GM12878 (cell line): ENCODE measurements at regions of chr9 and their contacts with region 1.

Region 1: GRCh38 chr9:371349-371748 is 156.7 kb downstream of the DOCK8 start:
- DNase-seq: no peak
- ATAC-seq: no peak
- H3K4me3 ChIP-seq: no peak overlapping the region
- H3K27ac ChIP-seq: no peak overlapping the region
- H3K4me1 ChIP-seq: no peaks in the 10 kb centered on the region
- H3K27me3 ChIP-seq: no peaks in the 10 kb centered on the region
- CTCF ChIP-seq: no peak
- EP300 ChIP-seq: no peak
- POLR2A ChIP-seq: no peak
- RAD21 ChIP-seq: no peak

Region 2: GRCh38 chr9:257957-258356 is 113.4 kb before region 1 on chr9:
- CTCF ChIA-PET with region 1: no interaction called
- POLR2A ChIA-PET with region 1: no interaction called
- RAD21 ChIA-PET with region 1: no interaction called
- SMC1A ChIA-PET with region 1: no interaction called
- in situ Hi-C with region 1: no loop called
- intact Hi-C with region 1: no loop called
- DNase-seq: no peak
- ATAC-seq: no peak
- H3K4me3 ChIP-seq: no peak overlapping the region
- H3K27ac ChIP-seq: no peak overlapping the region
- H3K4me1 ChIP-seq: no peaks in the 10 kb centered on the region
- H3K27me3 ChIP-seq: no peaks in the 10 kb centered on the region
- CTCF ChIP-seq: no peak
- EP300 ChIP-seq: no peak
- POLR2A ChIP-seq: no peak
- RAD21 ChIP-seq: no peak

Region 3: GRCh38 chr9:306887-307286 is 64.5 kb before region 1 on chr9:
- CTCF ChIA-PET with region 1: no interaction called
- POLR2A ChIA-PET with region 1: no interaction called
- RAD21 ChIA-PET with region 1: no interaction called
- SMC1A ChIA-PET with region 1: no interaction called
- in situ Hi-C with region 1: no loop called
- intact Hi-C with region 1: loop called (anchors 2 kb)
- DNase-seq: no peak
- ATAC-seq: peak; percentile 52; the same call in 2 of the 3 replicates
- H3K4me3 ChIP-seq: no peak overlapping the region
- H3K27ac ChIP-seq: no peak overlapping the region
- H3K4me1 ChIP-seq: no peaks in the 10 kb centered on the region
- H3K27me3 ChIP-seq: no peaks in the 10 kb centered on the region
- CTCF ChIP-seq: peak; percentile 38 to 43 (median 40); a peak in 4 of 6 replicates
- EP300 ChIP-seq: no peak
- POLR2A ChIP-seq: no peak
- RAD21 ChIP-seq: peak; percentile 65

Region 4: GRCh38 chr9:326667-327066 is 44.7 kb before region 1 on chr9:
- CTCF ChIA-PET with region 1: no interaction called
- POLR2A ChIA-PET with region 1: no interaction called
- RAD21 ChIA-PET with region 1: no interaction called
- SMC1A ChIA-PET with region 1: no interaction called
- in situ Hi-C with region 1: no loop called
- intact Hi-C with region 1: no loop called
- DNase-seq: no peak
- ATAC-seq: peak; percentile 24; the same call in 1 of the 3 replicates
- H3K4me3 ChIP-seq: no peak overlapping the region
- H3K27ac ChIP-seq: no peak overlapping the region
- H3K4me1 ChIP-seq: no peaks in the 10 kb centered on the region
- H3K27me3 ChIP-seq: no peaks in the 10 kb centered on the region
- CTCF ChIP-seq: no peak
- EP300 ChIP-seq: no peak
- POLR2A ChIP-seq: no peak
- RAD21 ChIP-seq: no peak

Region 5: DNA sequence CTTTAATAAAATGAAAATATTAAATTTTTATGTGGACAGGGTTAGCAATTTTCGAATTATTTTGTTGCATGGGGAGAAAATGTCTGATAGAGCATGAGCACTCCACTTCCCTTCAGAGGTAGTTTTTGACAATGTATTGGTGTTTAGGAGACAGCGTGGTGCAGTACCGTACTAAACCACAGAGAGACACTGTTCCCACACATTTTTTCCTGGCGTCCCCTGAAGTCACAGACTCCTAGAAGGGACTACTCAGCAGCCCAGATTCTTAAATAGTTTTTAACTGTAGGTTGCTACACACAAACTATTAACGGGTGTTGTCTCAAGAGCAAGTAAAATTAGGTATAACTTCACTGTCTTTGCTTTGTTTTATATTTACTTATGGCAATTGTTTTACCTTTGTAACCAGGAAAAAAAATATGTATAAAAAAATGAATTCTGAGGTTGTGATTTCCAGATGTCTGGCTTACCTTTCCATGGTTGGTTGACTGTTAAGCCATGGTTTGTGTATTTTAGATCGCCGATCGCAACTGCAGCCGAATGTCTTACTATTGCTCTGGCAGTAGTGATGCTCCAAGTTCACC is 14.6 kb after region 1 on chr9:
- CTCF ChIA-PET with region 1: interaction called, 5 read pairs
- POLR2A ChIA-PET with region 1: interaction called, 5 read pairs
- RAD21 ChIA-PET with region 1: no interaction called
- SMC1A ChIA-PET with region 1: interaction called, 3 read pairs
- in situ Hi-C with region 1: no loop called
- intact Hi-C with region 1: loop called (anchors 1 kb)
- DNase-seq: no peak
- ATAC-seq: peak; percentile 74
- H3K4me3 ChIP-seq: no peak overlapping the region
- H3K27ac ChIP-seq: no peak overlapping the region
- H3K4me1 ChIP-seq: no peaks in the 10 kb centered on the region
- H3K27me3 ChIP-seq: no peaks in the 10 kb centered on the region
- CTCF ChIP-seq: peak; percentile 45 to 47 (median 46); a peak in 5 of 6 replicates
- EP300 ChIP-seq: no peak
- POLR2A ChIP-seq: no peak
- RAD21 ChIP-seq: peak; percentile 51

Region 6: GRCh38 chr9:419571-420402 is 48.4 kb after region 1 on chr9:
- CTCF ChIA-PET with region 1: no interaction called
- POLR2A ChIA-PET with region 1: no interaction called
- RAD21 ChIA-PET with region 1: no interaction called
- SMC1A ChIA-PET with region 1: no interaction called
- in situ Hi-C with region 1: no loop called
- intact Hi-C with region 1: loop called (anchors 5 kb)
- DNase-seq: no peak
- ATAC-seq: no peak
- H3K4me3 ChIP-seq: no peak overlapping the region
- H3K27ac ChIP-seq: no peak overlapping the region
- H3K4me1 ChIP-seq: no peaks in the 10 kb centered on the region
- H3K27me3 ChIP-seq: no peaks in the 10 kb centered on the region
- CTCF ChIP-seq: no peak
- EP300 ChIP-seq: no peak
- POLR2A ChIP-seq: no peak
- RAD21 ChIP-seq: no peak